Natural killer cell (primary cell): ENCODE measurements at regions of chr4 and their contacts with region 1.

Region 1: GRCh38 chr4:83110223-83110945 is 4.1 kb downstream of the PLAC8 start:
- DNase-seq: peak; percentile 84 to 94
- ATAC-seq: peak; percentile 65 to 87 (median 77)
- H3K4me3 ChIP-seq: peak overlapping the region; percentile 79
- H3K4me3 Mint-ChIP-seq: peak overlapping the region; percentile 90
- H3K27ac ChIP-seq: peak overlapping the region; percentile 67
- H3K27ac Mint-ChIP-seq: peak overlapping the region; percentile 96 to 98
- H3K4me1 ChIP-seq: peaks cover 38% of the 10 kb centered on the region
- H3K4me1 Mint-ChIP-seq: peaks cover 58 to 67% of the 10 kb centered on the region in 2 donors
- H3K27me3 ChIP-seq: no peaks in the 10 kb centered on the region
- H3K27me3 Mint-ChIP-seq: no peaks in the 10 kb centered on the region
- CTCF ChIP-seq: peak; percentile 71

Region 2: DNA sequence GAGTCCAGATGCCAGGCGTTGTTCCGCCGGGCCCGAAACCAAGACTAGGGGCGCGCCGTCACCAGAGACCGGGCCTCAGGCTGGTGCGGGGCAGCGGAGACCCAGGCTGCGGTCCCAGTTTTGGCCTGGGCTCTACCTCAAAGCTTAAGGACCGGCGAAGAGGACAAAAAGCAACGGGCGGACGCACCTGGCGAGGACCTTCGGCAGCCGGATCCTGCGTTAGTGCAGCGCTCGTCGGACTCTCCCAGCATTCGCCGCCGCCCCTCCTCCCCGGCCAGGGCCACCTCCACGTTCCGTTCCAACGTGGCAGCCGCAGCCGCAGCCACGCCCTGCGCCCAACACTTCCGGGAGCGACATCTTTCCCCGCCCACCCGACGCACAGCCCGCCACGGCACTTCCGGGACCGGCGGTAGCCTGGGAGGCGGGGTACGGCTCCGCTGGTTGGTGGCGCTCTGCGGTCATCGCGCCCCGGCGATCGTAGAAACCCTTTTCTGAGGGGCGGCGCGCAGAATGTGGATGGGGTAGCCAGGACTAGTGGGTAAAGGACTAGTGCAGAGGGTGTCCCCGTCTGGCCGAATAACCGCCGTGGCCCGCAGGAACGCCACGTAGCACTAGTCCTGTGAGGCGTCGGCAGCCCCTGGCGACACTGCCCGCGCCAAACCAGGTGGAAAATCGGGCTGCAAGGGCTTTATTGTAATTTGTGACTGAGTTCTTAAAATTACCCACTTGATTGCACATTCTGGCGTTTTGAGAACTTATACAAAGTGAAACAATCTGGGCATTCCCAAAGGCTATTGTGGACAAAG is 219.3 kb before region 1 on chr4 and contains the start of gene SEC31A:
- intact Hi-C with region 1: loop called (anchors 5 kb)
- DNase-seq: peak; percentile 96 to 98
- ATAC-seq: peak; percentile 92 to 98 (median 93)
- H3K4me3 ChIP-seq: peak within 1 kb of the TSS; percentile 96
- H3K4me3 Mint-ChIP-seq: peak within 1 kb of the TSS; percentile 96
- H3K27ac ChIP-seq: peak within 1 kb of the TSS; percentile 89
- H3K27ac Mint-ChIP-seq: peak within 1 kb of the TSS; percentile 97 to 99
- H3K4me1 ChIP-seq: peaks cover 7% of the 10 kb centered on the region
- H3K4me1 Mint-ChIP-seq: peaks cover 19 to 33% of the 10 kb centered on the region in 2 donors
- H3K27me3 ChIP-seq: no peaks in the 10 kb centered on the region
- H3K27me3 Mint-ChIP-seq: no peaks in the 10 kb centered on the region
- CTCF ChIP-seq: no peak
- total RNA-seq, gene SEC31A: 176 to 183 (median 177) TPM

Region 3: DNA sequence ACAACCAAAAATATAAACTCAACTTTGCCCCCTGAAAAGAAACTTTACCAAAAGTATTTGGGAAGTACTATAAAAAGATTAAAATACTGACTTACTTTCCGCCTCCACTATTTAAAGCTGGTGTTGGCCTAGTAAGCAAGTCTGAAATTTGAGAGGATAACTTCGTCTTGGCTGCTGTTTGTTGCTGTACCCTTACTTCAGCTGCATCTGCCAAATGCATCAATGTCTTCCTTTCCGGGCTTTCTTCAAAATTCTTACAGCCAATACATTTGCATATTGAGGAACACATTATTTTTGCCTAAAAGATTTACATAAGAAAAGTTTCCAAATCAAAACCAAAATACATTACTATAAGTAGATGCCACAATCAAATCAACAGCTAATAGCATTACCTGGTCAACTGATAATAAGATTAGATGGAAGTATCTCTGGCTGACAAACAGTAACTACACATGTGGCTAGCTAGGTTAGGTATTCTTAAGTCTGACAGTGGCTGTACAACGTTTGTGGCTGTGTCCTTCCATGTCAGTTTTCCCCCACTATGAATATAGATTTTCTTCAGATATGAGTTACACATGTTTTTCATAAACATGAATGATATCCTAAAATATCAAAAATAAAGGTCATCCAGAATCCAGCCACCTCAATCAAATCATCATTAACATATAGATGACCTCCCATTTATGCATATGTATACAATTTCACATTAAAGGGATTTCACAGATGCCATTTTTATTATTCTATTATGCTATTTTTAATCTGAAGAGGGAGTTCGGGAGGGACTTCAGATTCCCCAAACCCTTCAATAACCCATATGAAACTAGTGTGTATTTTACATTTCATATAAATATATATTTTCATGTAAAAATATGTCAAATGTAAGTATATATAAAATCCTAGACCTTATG is 179.3 kb before region 1 on chr4:
- intact Hi-C with region 1: no loop called
- DNase-seq: no peak
- ATAC-seq: no peak
- H3K4me3 ChIP-seq: no peak overlapping the region
- H3K4me3 Mint-ChIP-seq: no peak overlapping the region
- H3K27ac ChIP-seq: no peak overlapping the region
- H3K27ac Mint-ChIP-seq: no peak overlapping the region
- H3K4me1 ChIP-seq: no peaks in the 10 kb centered on the region
- H3K4me1 Mint-ChIP-seq: no peaks in the 10 kb centered on the region
- H3K27me3 ChIP-seq: no peaks in the 10 kb centered on the region
- H3K27me3 Mint-ChIP-seq: no peaks in the 10 kb centered on the region
- CTCF ChIP-seq: no peak

Region 4: DNA sequence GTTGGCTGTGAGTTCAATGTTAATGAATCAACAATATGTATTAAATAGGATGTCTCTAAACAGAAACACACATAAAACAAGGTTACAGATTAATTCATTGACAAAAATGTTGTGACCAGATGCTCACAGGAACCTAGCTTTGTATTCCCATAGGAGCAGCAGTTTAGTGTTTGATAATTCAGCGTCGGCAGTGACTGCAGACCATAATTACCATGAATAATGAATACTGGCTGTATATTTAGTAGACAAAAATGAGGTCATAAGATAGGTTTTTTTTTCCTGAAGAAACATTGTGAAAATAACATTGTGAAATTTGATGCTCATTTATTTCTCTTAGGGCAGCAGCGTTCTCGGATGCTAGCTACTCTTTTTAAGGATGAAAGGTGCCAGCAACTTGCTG is 47.6 kb before region 1 on chr4:
- intact Hi-C with region 1: no loop called
- DNase-seq: no peak
- ATAC-seq: no peak
- H3K4me3 ChIP-seq: no peak overlapping the region
- H3K4me3 Mint-ChIP-seq: no peak overlapping the region
- H3K27ac ChIP-seq: no peak overlapping the region
- H3K27ac Mint-ChIP-seq: no peak overlapping the region
- H3K4me1 ChIP-seq: no peaks in the 10 kb centered on the region
- H3K4me1 Mint-ChIP-seq: peaks cover 0 to 4% of the 10 kb centered on the region in 2 donors
- H3K27me3 ChIP-seq: no peaks in the 10 kb centered on the region
- H3K27me3 Mint-ChIP-seq: no peaks in the 10 kb centered on the region
- CTCF ChIP-seq: no peak

Region 5: DNA sequence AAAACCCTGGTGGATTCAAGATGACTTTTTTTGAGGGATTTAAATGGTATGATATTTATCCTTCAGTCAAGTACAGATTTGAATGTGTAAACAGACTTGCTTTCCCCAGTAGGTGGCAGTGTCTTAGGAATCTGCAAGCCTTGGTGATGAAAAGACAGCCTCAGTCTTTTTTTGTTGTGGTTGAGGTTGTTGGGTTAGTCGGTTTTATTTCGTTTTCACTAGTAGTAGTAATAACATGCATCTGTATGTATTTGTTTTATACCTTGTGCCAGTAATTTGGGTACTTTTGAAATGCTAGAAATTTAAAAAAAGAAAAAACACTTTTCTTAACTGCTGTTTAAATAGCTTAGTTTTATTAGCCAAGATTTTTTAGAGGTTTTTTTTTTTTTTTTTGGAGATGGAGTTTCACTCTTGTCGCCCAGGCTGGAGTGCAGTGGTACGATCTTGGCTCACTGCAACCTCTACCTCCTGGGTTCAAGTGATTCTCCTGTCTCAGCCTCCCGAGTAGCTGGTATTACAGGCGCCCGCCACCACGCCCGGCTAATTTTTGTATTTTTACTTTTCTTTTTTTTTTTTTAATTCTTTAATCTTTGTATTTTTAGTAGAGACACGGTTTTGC is 36.2 kb before region 1 on chr4:
- intact Hi-C with region 1: loop called (anchors 1 kb)
- DNase-seq: peak in 1 of 2 donors; percentile 93
- ATAC-seq: peak; percentile 92 to 97 (median 94)
- H3K4me3 ChIP-seq: no peak overlapping the region
- H3K4me3 Mint-ChIP-seq: peak overlapping the region; percentile 86
- H3K27ac ChIP-seq: no peak overlapping the region
- H3K27ac Mint-ChIP-seq: peak overlapping the region; percentile 67 to 85
- H3K4me1 ChIP-seq: peaks cover 17% of the 10 kb centered on the region
- H3K4me1 Mint-ChIP-seq: peaks cover 30 to 37% of the 10 kb centered on the region in 2 donors
- H3K27me3 ChIP-seq: no peaks in the 10 kb centered on the region
- H3K27me3 Mint-ChIP-seq: no peaks in the 10 kb centered on the region
- CTCF ChIP-seq: peak; percentile 75

Region 6: GRCh38 chr4:83095344-83095743 is 15.0 kb before region 1 on chr4:
- intact Hi-C with region 1: loop called (anchors 2 kb)
- DNase-seq: no peak
- ATAC-seq: no peak
- H3K4me3 ChIP-seq: no peak overlapping the region
- H3K4me3 Mint-ChIP-seq: peak overlapping the region; percentile 82
- H3K27ac ChIP-seq: no peak overlapping the region
- H3K27ac Mint-ChIP-seq: peak overlapping the region; percentile 96 to 98
- H3K4me1 ChIP-seq: peaks cover 36% of the 10 kb centered on the region
- H3K4me1 Mint-ChIP-seq: peaks cover 82% of the 10 kb centered on the region in 2 donors
- H3K27me3 ChIP-seq: no peaks in the 10 kb centered on the region
- H3K27me3 Mint-ChIP-seq: no peaks in the 10 kb centered on the region
- CTCF ChIP-seq: no peak

Region 7: DNA sequence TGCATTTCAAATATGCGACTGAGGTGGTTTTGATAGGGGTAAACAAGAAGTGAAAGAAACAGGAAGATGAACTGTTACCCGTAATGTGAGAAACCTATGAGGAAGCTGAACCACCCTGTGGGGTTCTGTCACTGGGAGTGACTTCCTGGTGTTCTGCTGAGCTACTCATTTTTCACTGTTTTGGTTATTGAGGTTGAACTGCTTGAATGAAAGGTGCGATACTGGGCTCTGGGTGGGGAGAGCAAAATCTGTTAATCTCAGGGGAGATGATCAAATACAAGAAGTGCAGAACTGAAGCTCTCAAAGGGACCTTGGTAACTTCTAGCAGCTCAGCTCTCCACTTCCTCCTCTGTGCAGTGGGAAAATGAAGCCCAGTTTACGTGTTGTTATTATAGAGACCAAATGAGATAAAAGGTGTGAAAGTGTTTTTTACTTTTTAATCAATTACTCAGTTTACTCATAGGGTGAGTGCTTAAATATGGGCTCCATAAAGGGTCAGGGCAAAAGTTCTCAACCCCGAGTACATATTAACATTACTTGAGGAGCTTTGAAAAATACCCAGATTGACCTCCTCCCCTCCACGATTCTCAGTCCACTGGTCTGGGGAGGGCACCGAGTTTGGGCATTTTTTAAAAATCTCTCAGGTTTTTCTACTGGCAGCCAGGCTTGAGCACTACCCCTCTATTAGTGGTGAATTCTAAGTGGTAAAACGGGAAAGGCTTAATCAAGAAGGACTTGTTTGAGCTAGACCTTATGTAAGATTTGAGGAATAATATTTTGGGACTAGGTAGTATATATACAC is 107.5 kb after region 1 on chr4:
- intact Hi-C with region 1: loop called (anchors 2 kb)
- DNase-seq: peak; percentile 60 to 90
- ATAC-seq: peak; percentile 80 to 95 (median 93)
- H3K4me3 ChIP-seq: no peak overlapping the region
- H3K4me3 Mint-ChIP-seq: peak overlapping the region; percentile 77
- H3K27ac ChIP-seq: peak overlapping the region; percentile 88
- H3K27ac Mint-ChIP-seq: peak overlapping the region; percentile 83 to 96
- H3K4me1 ChIP-seq: peaks cover 81% of the 10 kb centered on the region
- H3K4me1 Mint-ChIP-seq: peaks cover 92 to 94% of the 10 kb centered on the region in 2 donors
- H3K27me3 ChIP-seq: no peaks in the 10 kb centered on the region
- H3K27me3 Mint-ChIP-seq: no peaks in the 10 kb centered on the region
- CTCF ChIP-seq: no peak